ENCODE measurements at regions of chr5 and their contacts with region 1.

Region 1: GRCh38 chr5:149485655-149486425 is 65.4 kb downstream of the CSNK1A1 start:
- DNase-seq: peak; percentile 97
- H3K4me3 Mint-ChIP-seq: no peak overlapping the region
- H3K27ac Mint-ChIP-seq: peak overlapping the region; percentile 98
- H3K4me1 Mint-ChIP-seq: peaks cover 57% of the 10 kb centered on the region
- H3K27me3 Mint-ChIP-seq: no peaks in the 10 kb centered on the region
- CTCF ChIP-seq: no peak

Region 2: DNA sequence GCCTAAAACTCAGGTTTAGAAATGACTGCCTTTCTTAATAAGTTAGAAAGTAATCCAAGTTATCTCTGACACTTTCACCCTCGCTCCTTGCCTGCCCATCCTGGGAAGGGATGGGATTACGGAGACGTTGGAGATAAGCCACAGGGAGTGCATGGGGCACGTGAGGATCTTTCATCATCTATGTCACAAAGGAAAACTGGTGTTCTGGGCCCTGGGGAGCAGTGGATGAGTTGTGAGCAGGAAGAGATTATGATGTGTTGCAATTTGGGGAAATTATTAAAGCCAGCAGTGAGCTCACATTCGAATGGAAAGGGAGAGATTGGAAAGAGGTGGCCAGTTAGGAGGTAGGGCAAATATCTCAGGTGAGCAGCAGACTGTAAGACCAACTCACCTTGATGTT is 201.3 kb before region 1 on chr5:
- CTCF ChIA-PET with region 1: no interaction called
- POLR2A ChIA-PET with region 1: no interaction called
- intact Hi-C with region 1: no loop called
- DNase-seq: peak; percentile 45
- H3K4me3 Mint-ChIP-seq: no peak overlapping the region
- H3K27ac Mint-ChIP-seq: no peak overlapping the region
- H3K4me1 Mint-ChIP-seq: peaks cover 13% of the 10 kb centered on the region
- H3K27me3 Mint-ChIP-seq: no peaks in the 10 kb centered on the region
- CTCF ChIP-seq: no peak

Region 3: GRCh38 chr5:149448831-149449714 is 36.8 kb before region 1 on chr5:
- CTCF ChIA-PET with region 1: interaction called, 103 read pairs
- POLR2A ChIA-PET with region 1: interaction called, 1,058 read pairs
- intact Hi-C with region 1: no loop called
- DNase-seq: peak; percentile 54
- H3K4me3 Mint-ChIP-seq: no peak overlapping the region
- H3K27ac Mint-ChIP-seq: peak overlapping the region; percentile 55
- H3K4me1 Mint-ChIP-seq: peaks cover 45% of the 10 kb centered on the region
- H3K27me3 Mint-ChIP-seq: no peaks in the 10 kb centered on the region
- CTCF ChIP-seq: no peak

Region 4: DNA sequence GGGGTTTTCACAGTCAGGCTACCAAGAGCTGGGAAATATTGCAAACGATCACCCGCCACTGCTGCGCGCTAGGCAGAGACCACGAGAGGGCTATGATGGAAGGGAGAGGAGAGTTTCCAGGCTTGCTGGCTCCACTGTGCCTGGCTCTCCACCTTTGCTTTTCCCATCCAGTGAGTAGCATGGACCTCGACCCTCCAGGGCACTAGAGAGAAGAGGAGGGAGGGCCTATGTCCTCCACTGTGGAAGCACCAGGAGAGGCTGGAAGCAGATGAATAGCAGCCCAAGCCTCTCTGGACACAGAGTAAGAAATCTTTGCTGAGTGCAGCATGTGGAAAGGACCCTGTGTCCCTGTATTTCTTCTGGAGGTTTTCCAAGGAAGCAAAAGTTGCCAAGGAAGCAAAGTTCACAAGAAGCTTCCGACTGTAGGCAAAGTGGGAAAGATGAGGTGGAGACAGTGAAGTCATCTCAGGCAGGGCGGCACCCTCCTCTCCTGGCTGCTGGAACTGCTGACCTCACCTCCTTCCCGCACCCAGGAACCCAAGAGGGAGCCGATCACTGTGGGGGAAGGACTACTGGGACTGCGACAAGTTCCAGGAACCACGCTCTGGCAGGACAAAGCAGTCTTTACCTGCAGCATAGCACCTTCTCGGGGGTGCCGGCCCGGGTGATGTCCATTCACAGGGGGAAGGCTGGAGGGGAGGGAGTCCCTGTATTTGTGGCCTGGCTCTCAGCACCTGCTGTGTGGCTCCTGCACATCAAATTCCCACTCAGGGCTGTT is 14.2 kb before region 1 on chr5:
- CTCF ChIA-PET with region 1: interaction called, 47 read pairs
- POLR2A ChIA-PET with region 1: interaction called, 1,058 read pairs
- intact Hi-C with region 1: no loop called
- DNase-seq: peak; percentile 63
- H3K4me3 Mint-ChIP-seq: no peak overlapping the region
- H3K27ac Mint-ChIP-seq: peak overlapping the region; percentile 64
- H3K4me1 Mint-ChIP-seq: peaks cover 28% of the 10 kb centered on the region
- H3K27me3 Mint-ChIP-seq: no peaks in the 10 kb centered on the region
- CTCF ChIP-seq: no peak

Region 5: GRCh38 chr5:149497357-149497756 is 11.5 kb after region 1 on chr5:
- CTCF ChIA-PET with region 1: interaction called, 3 read pairs
- POLR2A ChIA-PET with region 1: interaction called, 43 read pairs
- intact Hi-C with region 1: no loop called
- DNase-seq: no peak
- H3K4me3 Mint-ChIP-seq: no peak overlapping the region
- H3K27ac Mint-ChIP-seq: peak overlapping the region; percentile 14
- H3K4me1 Mint-ChIP-seq: no peaks in the 10 kb centered on the region
- H3K27me3 Mint-ChIP-seq: no peaks in the 10 kb centered on the region
- CTCF ChIP-seq: no peak

Region 6: DNA sequence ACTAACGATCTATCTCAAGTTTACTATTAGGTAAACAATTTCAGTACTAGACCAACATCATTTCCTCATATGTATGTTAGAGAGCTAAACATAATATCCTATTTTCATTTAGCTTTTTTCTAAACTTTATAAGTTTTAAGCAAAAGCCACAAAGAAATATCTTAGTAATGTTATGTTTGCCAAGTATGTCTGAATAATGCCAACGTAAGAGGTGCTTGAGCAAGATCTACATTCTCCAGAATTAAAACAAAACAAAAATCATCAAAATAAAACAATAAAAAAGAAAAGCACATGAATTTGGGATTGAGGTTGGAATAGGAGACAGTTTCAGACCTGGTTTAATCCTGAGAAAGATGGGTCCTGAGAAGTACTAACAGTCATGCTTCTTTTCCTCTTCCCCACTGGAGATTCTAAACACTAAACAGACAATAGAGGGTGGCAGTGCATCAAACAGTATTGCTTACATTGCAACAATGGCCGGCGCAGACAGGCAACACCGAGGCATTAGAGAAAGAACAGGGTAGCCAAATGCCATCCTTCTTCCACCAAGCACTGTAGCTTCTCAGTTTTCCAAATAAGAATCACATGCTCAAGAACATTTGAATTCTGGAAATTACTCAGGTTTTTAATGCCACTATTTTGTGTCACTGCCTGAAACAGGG is 31.8 kb after region 1 on chr5:
- CTCF ChIA-PET with region 1: interaction called, 4 read pairs
- POLR2A ChIA-PET with region 1: interaction called, 23 read pairs
- intact Hi-C with region 1: no loop called
- DNase-seq: peak; percentile 43
- H3K4me3 Mint-ChIP-seq: peak overlapping the region; percentile 36
- H3K27ac Mint-ChIP-seq: peak overlapping the region; percentile 52
- H3K4me1 Mint-ChIP-seq: peaks cover 63% of the 10 kb centered on the region
- H3K27me3 Mint-ChIP-seq: no peaks in the 10 kb centered on the region
- CTCF ChIP-seq: no peak

Region 7: DNA sequence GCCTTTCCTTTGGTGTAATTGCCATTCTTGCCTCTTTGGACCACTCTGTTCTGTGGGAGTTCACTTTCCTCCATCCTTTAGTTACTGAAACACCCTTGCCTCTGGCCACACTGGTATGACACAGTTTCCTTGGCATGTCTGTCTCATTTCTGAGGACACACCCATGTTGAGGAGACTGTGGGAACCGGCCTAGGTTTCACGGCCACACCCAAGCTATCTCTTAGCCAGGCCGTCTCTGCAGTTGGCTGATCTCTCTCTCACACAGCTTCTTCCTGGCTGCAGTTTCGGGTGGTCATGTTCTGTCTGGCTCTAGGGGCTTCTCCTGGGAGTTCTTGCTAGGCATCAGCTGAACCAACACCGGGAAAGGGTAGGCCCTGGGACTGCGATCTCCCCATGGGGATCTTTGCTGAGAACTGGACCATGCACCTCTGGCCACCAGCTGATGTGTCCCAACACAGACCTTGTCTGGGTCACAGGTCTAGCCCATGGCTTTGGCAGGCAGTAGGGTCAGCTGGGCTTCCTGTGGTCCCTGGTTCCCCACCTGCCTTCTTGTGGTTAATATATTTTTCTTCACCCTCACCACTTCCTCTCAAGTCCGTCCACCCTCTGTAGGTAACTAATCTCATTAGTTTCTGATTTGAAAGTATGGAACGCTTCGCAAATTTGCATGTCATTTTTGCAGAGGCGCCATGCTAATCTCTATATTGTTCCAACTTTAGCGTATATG is 120.3 kb after region 1 on chr5:
- CTCF ChIA-PET with region 1: no interaction called
- POLR2A ChIA-PET with region 1: interaction called, 11 read pairs
- intact Hi-C with region 1: no loop called
- DNase-seq: peak; percentile 99
- H3K4me3 Mint-ChIP-seq: no peak overlapping the region
- H3K27ac Mint-ChIP-seq: peak overlapping the region; percentile 91
- H3K4me1 Mint-ChIP-seq: peaks cover 48% of the 10 kb centered on the region
- H3K27me3 Mint-ChIP-seq: no peaks in the 10 kb centered on the region
- CTCF ChIP-seq: no peak